Left cardiac atrium (tissue), 4 donors: ENCODE measurements at regions of chr6 and their contacts with region 1.

Region 1: GRCh38 chr6:156564127-156564806 is 212.9 kb upstream of the ARID1B start:
- DNase-seq: peak; percentile 84
- ATAC-seq: peak; percentile 93 to 94

Region 2: GRCh38 chr6:156175971-156176421 is 388.3 kb before region 1 on chr6:
- intact Hi-C with region 1: loop called in 1 of 2 experiments (anchors 10 kb)
- DNase-seq: peak; percentile 39
- ATAC-seq: peak; percentile 76 to 82

Region 3: DNA sequence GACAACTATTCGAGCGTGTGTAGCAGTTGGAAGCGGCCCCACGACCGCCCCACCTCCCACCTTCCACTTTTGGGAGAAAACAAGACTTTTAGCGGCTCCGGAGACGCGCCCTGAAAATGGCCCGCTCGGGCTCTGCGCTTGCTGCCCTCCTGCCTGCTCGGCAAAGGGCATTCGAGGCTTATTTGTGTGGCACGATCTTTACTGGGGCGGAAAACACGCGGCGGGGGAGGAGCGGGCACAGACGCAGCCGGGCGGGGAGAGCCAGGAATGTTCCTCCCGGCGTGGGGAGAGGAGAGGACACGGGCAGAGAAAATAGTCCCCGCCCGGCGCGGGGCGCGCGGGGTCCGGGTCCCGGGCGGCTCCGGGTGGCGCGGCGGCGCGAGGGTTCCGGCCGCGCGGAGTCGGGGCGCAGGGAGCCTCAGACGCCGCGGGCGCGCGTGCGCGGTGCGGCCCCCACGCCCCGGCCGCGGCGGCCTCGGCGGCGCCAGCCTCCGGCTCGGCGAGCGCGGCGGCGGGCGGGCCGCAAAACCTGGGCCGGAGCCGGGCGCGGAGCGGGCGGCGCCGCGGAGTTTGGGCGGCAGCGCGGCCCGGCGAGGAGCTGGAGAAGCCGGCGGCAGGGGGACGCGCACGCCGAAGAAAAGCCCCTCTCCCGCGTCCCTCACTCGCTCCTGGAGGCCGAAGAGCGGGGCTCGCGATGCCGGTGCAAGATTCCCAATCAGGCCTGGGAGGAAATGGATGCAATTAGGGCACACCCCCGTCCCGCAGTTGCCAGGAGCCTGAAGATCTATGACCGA is 122.9 kb after region 1 on chr6:
- intact Hi-C with region 1: loop called (anchors 2 to 10 kb)
- DNase-seq: peak; percentile 91
- ATAC-seq: peak; percentile 94 to 95

Region 4: GRCh38 chr6:157021344-157021992 is 457.2 kb after region 1 on chr6:
- intact Hi-C with region 1: loop called in 1 of 2 experiments (anchors 10 kb)
- DNase-seq: peak; percentile 91
- ATAC-seq: peak; percentile 93 to 95